T-cell (primary cell): ENCODE measurements at regions of chr1 and their contacts with region 1.

Region 1: GRCh38 chr1:209769171-209769904 is 13.5 kb downstream of the TRAF3IP3 start:
- DNase-seq: peak; percentile 55 to 85 (median 72)
- ATAC-seq: peak; percentile 75 to 79 (median 78)
- H3K4me3 ChIP-seq: peak overlapping the region; percentile 83 to 95
- H3K4me3 Mint-ChIP-seq: no peak overlapping the region
- H3K27ac ChIP-seq: peak overlapping the region; percentile 77
- H3K27ac Mint-ChIP-seq: no peak overlapping the region
- H3K4me1 ChIP-seq: peaks cover 59 to 60% of the 10 kb centered on the region in 2 experiments
- H3K4me1 Mint-ChIP-seq: peaks cover 35 to 46% (median 42%) of the 10 kb centered on the region in 3 donors
- H3K27me3 ChIP-seq: no peaks in the 10 kb centered on the region
- H3K27me3 Mint-ChIP-seq: no peaks in the 10 kb centered on the region

Region 2: DNA sequence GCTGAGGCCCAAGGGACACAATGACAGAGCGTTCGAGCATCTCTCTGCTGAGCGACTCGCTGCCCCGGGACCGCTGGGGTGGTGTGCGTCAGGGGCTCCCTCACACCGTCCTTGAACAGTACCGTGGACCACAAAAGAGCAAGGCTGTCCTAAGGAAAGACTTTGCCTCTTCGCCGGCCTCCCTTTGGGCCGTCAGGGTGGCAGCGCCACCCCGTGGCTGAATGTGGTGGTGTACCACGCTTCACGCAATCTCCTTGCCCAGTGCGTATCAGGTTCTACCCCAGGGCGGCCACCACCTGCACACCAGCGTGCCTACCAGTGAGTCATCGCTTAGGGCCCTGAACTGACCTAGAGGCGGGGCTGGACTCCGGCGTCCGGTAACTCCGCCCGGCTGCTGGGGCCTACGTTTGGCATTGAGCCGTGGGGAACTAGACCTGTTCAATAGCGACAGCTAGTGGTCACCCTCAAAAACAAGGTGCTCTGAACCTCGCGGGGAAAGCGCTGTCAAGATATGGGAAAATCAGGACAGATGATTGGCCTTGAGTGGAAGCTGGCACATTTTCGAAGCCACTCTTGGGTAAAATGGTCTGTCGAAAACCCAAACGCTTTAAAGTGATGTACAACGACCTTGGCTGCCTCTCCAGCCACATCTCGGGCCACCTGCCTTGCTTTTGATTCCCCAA is 21.6 kb before region 1 on chr1:
- CTCF ChIA-PET with region 1: interaction called, 4 to 34 read pairs
- POLR2A ChIA-PET with region 1: interaction called, 3 to 6 read pairs
- DNase-seq: peak; percentile 53 to 85 (median 74)
- ATAC-seq: peak; percentile 79 to 86 (median 85)
- H3K4me3 ChIP-seq: peak overlapping the region; percentile 56 to 71
- H3K4me3 Mint-ChIP-seq: peak overlapping the region; percentile 77 to 87 (median 87)
- H3K27ac ChIP-seq: peak overlapping the region; percentile 45
- H3K27ac Mint-ChIP-seq: peak overlapping the region; percentile 97 to 98
- H3K4me1 ChIP-seq: peaks cover 36 to 43% of the 10 kb centered on the region in 2 experiments
- H3K4me1 Mint-ChIP-seq: peaks cover 49 to 60% (median 54%) of the 10 kb centered on the region in 3 donors
- H3K27me3 ChIP-seq: no peaks in the 10 kb centered on the region
- H3K27me3 Mint-ChIP-seq: no peaks in the 10 kb centered on the region

Region 3: DNA sequence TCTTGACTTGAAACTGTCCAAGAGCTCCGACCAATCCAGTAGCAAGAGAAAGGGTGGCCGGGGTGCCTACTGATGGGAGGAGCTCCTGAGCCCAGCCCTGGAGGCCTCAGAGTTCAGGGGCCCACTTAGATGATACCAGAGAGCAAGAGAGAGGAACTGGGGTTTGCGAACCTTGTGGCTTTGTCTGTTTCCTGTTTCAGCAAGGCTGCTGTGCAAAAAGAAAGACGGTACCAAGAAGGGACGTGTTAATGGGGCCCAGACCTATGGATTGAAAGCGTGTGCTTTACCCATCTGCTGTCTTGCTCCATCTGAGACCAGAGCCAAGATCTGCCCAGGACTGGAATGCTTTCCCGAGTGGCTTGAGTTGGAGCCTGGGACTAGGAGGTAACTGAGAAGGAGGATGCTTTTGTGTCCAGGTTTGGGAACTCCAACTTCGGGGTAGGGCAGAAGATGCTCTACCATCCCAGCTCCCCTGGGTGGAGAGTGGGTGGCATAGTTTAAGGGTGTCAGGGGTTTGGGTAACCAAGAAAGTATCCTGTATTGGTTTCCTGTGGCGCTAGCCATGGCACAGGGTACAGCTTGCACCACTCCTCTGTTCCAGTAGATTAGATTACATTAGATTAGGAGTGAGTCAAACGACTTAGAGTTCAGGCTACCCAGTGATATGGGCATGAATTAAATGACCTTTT is 13.3 kb before region 1 on chr1 and contains the start of gene TRAF3IP3:
- CTCF ChIA-PET with region 1: interaction called, 14 to 41 read pairs
- POLR2A ChIA-PET with region 1: interaction called, 6 to 8 read pairs
- DNase-seq: peak; percentile 49 to 88 (median 74)
- ATAC-seq: peak; percentile 89 to 95 (median 92)
- H3K4me3 ChIP-seq: peak within 1 kb of the TSS; percentile 78 to 79
- H3K4me3 Mint-ChIP-seq: peak within 1 kb of the TSS; percentile 92 to 98 (median 92)
- H3K27ac ChIP-seq: peak within 1 kb of the TSS; percentile 73
- H3K27ac Mint-ChIP-seq: peak within 1 kb of the TSS; percentile 99
- H3K4me1 ChIP-seq: peaks cover 59 to 73% of the 10 kb centered on the region in 2 experiments
- H3K4me1 Mint-ChIP-seq: peaks cover 75 to 93% (median 86%) of the 10 kb centered on the region in 3 donors
- H3K27me3 ChIP-seq: no peaks in the 10 kb centered on the region
- H3K27me3 Mint-ChIP-seq: no peaks in the 10 kb centered on the region
- total RNA-seq, gene TRAF3IP3: 332 to 502 (median 465) TPM

Region 4: DNA sequence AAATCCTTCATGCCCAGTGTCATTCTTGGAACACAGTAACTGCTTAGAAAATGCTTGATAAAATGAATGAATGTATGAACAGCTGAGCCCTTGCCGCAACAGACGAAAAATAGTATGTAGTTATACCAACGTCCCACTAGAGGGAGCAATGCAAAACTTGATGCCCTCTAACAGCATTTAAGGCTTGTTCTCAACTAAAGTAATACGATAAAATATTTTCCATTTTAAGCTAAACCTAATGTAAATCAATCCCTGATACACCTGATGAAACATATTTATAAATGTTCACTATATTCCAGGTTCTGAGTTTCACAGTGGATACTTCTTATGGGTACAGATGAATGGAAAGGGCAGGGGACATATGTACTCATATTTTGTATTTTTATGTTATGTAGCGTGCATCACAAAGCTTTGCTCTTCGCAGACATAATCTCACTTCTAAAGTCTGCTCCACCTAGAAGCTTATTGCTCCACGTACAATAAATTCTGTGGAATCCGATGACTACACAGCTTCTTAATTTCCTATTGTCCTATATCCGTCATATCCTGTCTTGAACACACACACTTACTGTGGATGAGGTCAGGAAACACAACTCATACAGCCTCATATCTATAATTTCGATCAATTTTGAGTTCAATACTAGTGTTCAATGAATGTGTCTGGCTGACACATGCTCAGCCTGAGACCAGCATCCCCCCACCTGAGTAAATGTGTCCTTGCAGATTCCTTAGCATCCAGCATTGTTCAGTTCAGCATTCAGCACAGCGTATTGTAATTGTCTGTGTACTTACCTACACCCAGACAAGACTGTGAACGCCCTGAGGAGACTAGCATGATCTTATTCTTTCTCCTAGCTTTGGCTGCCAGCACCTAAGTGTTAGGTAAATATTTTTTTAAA is 54.1 kb after region 1 on chr1:
- CTCF ChIA-PET with region 1: interaction called, 4 to 12 read pairs
- POLR2A ChIA-PET with region 1: interaction called in 1 of 2 experiments, 4 read pairs
- DNase-seq: peak in 8 of 35 experiments; percentile 2 to 79 (median 12)
- ATAC-seq: peak in 2 of 4 experiments; percentile 39 to 48
- H3K4me3 ChIP-seq: no peak overlapping the region
- H3K4me3 Mint-ChIP-seq: no peak overlapping the region
- H3K27ac ChIP-seq: no peak overlapping the region
- H3K27ac Mint-ChIP-seq: peak overlapping the region in 1 of 2 donors; percentile 21
- H3K4me1 ChIP-seq: peaks cover 0 to 8% of the 10 kb centered on the region in 2 experiments
- H3K4me1 Mint-ChIP-seq: peaks cover 21 to 22% (median 22%) of the 10 kb centered on the region in 3 donors
- H3K27me3 ChIP-seq: peaks cover 0 to 14% of the 10 kb centered on the region in 2 experiments
- H3K27me3 Mint-ChIP-seq: peaks cover 22 to 29% of the 10 kb centered on the region in 2 donors

Region 5: GRCh38 chr1:210061992-210062391 is 292.7 kb after region 1 on chr1:
- CTCF ChIA-PET with region 1: no interaction called
- POLR2A ChIA-PET with region 1: no interaction called
- DNase-seq: no peak
- ATAC-seq: no peak
- H3K4me3 ChIP-seq: no peak overlapping the region
- H3K4me3 Mint-ChIP-seq: no peak overlapping the region
- H3K27ac ChIP-seq: no peak overlapping the region
- H3K27ac Mint-ChIP-seq: no peak overlapping the region
- H3K4me1 ChIP-seq: no peaks in the 10 kb centered on the region
- H3K4me1 Mint-ChIP-seq: no peaks in the 10 kb centered on the region
- H3K27me3 ChIP-seq: no peaks in the 10 kb centered on the region
- H3K27me3 Mint-ChIP-seq: peaks cover 4 to 6% of the 10 kb centered on the region in 2 donors